PC-3 (cell line): ENCODE measurements at regions of chr17 and their contacts with region 1.

Region 1: DNA sequence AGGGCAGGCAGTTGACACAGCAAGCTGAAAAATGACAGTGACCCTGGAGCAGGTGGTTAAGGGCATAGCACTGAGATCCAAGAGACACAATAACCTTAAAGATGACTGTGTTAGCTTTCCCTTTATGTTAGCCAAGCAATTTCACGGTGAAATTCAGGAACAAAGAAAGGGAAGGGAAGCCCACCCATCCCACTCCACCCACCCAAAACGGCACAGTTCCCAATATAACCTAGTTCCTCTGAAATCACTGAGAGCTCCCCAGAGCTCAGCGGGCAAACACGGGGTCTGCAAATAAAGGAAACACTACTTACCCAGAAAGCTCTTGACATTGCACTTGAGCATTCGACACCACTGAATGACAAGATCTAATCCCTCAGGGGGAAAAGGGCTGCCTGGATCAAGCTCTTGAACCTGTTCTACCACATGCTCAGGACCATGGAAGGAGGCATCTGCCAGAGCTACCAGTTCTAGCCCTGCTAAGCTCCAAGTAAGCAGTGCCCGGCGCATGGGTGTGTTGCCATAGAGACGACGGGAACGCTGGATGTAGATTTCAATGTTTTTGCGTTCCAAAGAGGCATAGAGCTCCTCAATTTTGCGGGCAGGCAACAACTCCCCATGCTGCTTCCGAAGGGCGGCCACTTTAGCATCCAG is 10.6 kb downstream of the BLTP2 start:
- DNase-seq: no peak
- ATAC-seq: no peak
- H3K4me3 ChIP-seq: no peak overlapping the region
- H3K27ac ChIP-seq: no peak overlapping the region
- H3K4me1 ChIP-seq: no peaks in the 10 kb centered on the region
- H3K27me3 ChIP-seq: no peaks in the 10 kb centered on the region
- CTCF ChIP-seq: no peak

Region 2: DNA sequence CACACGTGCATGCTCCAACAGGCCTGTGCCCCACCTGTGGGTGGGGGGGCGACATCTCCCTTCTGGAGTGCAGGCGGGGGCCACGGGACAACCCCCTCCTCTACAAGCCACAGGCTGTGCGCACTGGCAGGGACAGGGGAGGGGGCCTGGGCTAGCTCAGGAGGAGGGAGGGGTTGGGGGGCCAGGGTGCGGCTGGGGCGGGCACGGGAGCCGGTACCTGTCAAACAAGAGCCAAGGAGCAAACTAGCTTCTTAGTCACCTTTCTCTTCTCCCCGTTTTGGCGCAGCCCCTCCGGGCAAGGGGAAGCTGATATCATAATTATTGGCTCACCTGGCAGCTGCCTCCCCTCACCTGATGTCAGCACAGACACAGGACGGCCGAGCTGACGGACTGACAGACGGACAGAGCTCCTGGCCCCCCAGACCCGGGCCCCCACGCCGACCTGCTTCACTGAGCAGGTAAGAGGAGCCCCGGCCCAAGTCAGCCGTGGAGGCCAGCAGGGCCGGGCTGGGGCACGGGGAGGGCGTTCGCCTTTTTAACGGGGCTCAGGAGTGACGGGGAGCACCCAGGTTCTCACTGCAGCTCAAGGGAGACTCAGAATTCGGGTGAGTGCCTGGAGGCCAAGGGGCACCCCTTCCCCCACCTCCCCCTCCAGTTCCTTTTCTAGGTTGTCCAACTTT is 128.2 kb before region 1 on chr17 and contains the start of gene FOXN1:
- CTCF ChIA-PET with region 1: no interaction called
- POLR2A ChIA-PET with region 1: interaction called, 33 read pairs
- intact Hi-C with region 1: no loop called
- DNase-seq: no peak
- ATAC-seq: no peak
- H3K4me3 ChIP-seq: no peak within 1 kb of the TSS
- H3K27ac ChIP-seq: no peak within 1 kb of the TSS
- H3K4me1 ChIP-seq: no peaks in the 10 kb centered on the region
- H3K27me3 ChIP-seq: 0 out of 2 replicates have a peak, but pooled peaks cover 4% of the 10 kb centered on the region
- CTCF ChIP-seq: no peak
- total RNA-seq, gene FOXN1: not detected in 2 replicates